ENCODE measurements at regions of chr19 and their contacts with region 1.

Region 1: GRCh38 chr19:9934132-9934950 is 2.0 kb downstream of the OLFM2 start:
- DNase-seq: peak; percentile 65 to 93
- H3K4me3 ChIP-seq: no peak overlapping the region
- H3K4me1 ChIP-seq: peaks cover 17% of the 10 kb centered on the region
- H3K27me3 ChIP-seq: no peaks in the 10 kb centered on the region

Region 2: GRCh38 chr19:9827289-9828238 is 106.8 kb before region 1 on chr19 and contains the start of gene UBL5:
- in situ Hi-C with region 1: no loop called
- DNase-seq: peak; percentile 85 to 94
- H3K4me3 ChIP-seq: peak within 1 kb of the TSS; percentile 96
- H3K4me1 ChIP-seq: no peaks in the 10 kb centered on the region
- H3K27me3 ChIP-seq: no peaks in the 10 kb centered on the region

Region 3: DNA sequence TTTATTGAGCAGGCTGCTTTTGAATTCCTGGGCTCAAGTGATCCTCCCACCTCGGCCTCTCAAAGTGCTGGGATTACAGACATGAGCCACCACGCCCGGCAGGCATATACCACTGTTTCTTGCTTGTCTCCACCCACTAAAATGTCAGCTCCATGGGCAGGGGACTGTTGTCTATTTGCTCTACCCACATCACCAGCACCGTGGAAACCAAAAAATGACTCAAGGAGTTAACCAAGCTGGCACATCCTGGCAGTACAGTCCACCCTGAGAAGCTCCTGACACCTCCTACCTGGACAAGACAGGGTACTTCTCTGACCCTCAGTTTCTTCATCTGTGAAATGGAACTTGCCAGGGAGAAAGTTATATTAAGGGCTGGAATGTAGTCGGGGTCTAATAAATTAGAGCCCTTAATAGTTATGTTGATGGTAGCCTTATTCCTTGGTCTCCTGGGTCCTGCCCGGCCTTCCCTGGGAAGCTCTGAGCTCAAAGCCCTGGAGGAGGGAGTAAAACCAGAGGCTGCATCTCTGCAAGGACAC is 92.9 kb after region 1 on chr19:
- in situ Hi-C with region 1: loop called (anchors 5 kb)
- DNase-seq: peak in 1 of 2 experiments; percentile 21
- H3K4me3 ChIP-seq: no peak overlapping the region
- H3K4me1 ChIP-seq: peaks cover 4% of the 10 kb centered on the region; the same call in 1 of the 2 replicates
- H3K27me3 ChIP-seq: peaks cover 19% of the 10 kb centered on the region

Region 4: GRCh38 chr19:10106100-10106936 is 172.0 kb after region 1 on chr19 and contains the start of gene PPAN:
- in situ Hi-C with region 1: loop called (anchors 10 kb)
- DNase-seq: peak; percentile 99
- H3K4me3 ChIP-seq: peak within 1 kb of the TSS; percentile 85
- H3K4me1 ChIP-seq: peaks cover 5% of the 10 kb centered on the region
- H3K27me3 ChIP-seq: no peaks in the 10 kb centered on the region

Region 5: GRCh38 chr19:10230861-10231611 is 296.7 kb after region 1 on chr19 and contains the start of gene S1PR2:
- in situ Hi-C with region 1: loop called (anchors 25 kb)
- DNase-seq: peak; percentile 57 to 89
- H3K4me3 ChIP-seq: peak within 1 kb of the TSS; percentile 67
- H3K4me1 ChIP-seq: no peaks in the 10 kb centered on the region
- H3K27me3 ChIP-seq: no peaks in the 10 kb centered on the region

Measured in HAP-1 (cell line).